Naive thymus-derived CD4-positive, alpha-beta T cell (primary cell): ENCODE measurements at regions of chr3 and their contacts with region 1.

Region 1: DNA sequence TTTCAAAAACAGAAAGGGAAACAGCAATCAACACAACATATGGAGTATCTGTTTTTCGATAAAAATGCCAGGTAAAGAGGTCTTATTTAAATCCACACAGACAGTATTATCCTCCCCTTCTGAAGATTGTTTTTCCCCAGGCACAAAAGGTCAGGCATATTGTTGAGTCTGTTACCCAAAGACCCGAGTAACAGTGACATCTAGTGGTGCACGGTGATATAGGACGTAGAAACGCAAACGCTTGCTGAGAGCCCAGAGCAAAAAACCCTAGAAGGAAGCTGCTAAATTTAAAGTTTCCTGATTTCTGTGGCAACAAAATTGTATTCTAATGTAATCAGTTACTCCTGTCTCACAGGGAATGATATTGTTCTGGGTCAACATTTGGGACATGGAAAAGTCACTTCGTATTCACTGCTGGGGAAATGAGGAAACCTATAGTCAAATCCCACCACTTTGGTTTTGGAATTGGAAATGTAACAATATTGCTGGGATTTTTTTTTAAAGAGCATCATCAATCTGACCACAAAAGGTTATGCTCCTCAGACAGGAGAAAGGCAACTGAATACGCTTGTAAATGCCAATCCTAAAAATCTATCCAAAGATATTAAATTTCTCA is 312.7 kb upstream of the CCDC54 start:
- DNase-seq: peak; percentile 6 to 57 (median 39)
- ATAC-seq: peak; percentile 82
- H3K4me3 ChIP-seq: no peak overlapping the region
- H3K4me3 Mint-ChIP-seq: no peak overlapping the region
- H3K27ac ChIP-seq: no peak overlapping the region
- H3K27ac Mint-ChIP-seq: no peak overlapping the region
- H3K4me1 ChIP-seq: peaks cover 4 to 7% of the 10 kb centered on the region in 2 donors
- H3K4me1 Mint-ChIP-seq: peaks cover 6 to 15% (median 10%) of the 10 kb centered on the region in 7 donors
- H3K27me3 ChIP-seq: no peaks in the 10 kb centered on the region
- H3K27me3 Mint-ChIP-seq: peaks cover 0 to 17% (median 8%) of the 10 kb centered on the region in 5 donors

Region 2: DNA sequence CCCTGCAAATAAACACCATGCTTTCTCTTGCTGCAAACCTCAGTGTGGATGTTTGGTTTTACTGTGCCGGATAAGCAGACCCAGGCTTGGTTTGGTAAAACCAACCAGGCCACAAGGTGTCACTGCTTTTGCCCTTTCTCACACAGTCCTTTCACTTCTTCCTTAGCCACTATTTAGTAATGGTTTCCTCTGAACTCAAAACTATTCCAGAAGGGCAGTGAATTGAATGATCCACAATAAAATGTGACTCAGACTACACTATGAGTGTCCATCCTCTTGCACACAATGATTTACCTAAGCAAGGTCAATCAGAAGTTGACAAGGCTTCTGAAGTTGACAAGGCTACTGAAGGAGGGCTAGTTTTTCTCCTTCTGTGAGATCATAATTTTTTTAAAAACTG is 239.7 kb before region 1 on chr3:
- CTCF ChIA-PET with region 1: no interaction called
- POLR2A ChIA-PET with region 1: no interaction called
- intact Hi-C with region 1: loop called in 1 of 2 experiments (anchors 1 kb)
- DNase-seq: no peak
- ATAC-seq: no peak
- H3K4me3 ChIP-seq: no peak overlapping the region
- H3K4me3 Mint-ChIP-seq: no peak overlapping the region
- H3K27ac ChIP-seq: no peak overlapping the region
- H3K27ac Mint-ChIP-seq: no peak overlapping the region
- H3K4me1 ChIP-seq: no peaks in the 10 kb centered on the region
- H3K4me1 Mint-ChIP-seq: peaks cover 0 to 18% (median 5%) of the 10 kb centered on the region in 7 donors
- H3K27me3 ChIP-seq: no peaks in the 10 kb centered on the region
- H3K27me3 Mint-ChIP-seq: peaks cover 0 to 5% (median 0%) of the 10 kb centered on the region in 5 donors